ENCODE measurements at regions of chr13 and their contacts with region 1.

Region 1: DNA sequence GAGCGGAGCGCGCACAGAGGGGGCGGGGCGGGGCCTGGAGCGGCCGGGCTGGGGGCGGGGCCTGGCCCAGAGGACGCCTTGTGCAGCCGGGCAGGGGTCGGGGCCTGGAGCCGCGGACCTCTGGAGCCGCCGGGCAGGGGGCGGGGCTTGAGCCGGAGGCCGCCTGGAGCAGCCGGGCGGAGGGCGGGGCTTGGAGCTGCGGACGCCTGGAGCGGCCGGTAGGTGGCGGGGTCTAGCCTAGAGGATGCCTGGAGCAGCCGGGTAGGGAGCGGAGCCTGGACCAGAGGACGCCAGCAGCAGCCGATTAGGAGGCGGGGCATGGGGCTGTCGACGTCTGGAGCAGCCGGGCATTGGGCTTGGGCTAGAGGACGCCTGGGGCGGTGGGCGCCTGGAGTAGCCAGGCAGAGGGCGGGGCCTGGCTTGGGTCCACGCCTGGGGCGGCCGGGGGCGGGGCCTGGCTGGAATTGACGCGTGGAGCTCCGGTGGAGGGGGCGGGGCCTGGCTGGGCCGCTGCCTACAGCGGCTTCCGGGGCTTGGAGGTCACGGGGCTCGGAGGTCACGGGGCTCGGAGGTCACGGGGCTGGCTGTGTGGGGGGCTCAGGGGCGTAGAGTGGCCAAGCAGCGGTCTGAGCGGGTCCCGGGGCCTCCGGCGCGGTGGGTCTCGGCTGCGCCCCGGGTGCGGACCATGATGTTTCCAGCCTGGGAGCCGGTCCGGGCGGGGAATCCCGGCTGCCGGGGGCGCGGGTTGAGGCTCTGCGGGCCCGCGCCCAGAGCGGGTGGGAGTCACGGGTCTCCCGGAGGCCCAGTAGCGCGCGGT is at the start of gene ANKRD10:
- DNase-seq: peak; percentile 98
- ATAC-seq: peak; percentile 84
- H3K4me3 Mint-ChIP-seq: peak within 1 kb of the TSS; percentile 92
- H3K27ac Mint-ChIP-seq: peak within 1 kb of the TSS; percentile 93
- H3K4me1 Mint-ChIP-seq: peaks cover 39% of the 10 kb centered on the region
- H3K27me3 Mint-ChIP-seq: no peaks in the 10 kb centered on the region
- total RNA-seq, gene ANKRD10: 65.1 to 91.8 TPM

Region 2: DNA sequence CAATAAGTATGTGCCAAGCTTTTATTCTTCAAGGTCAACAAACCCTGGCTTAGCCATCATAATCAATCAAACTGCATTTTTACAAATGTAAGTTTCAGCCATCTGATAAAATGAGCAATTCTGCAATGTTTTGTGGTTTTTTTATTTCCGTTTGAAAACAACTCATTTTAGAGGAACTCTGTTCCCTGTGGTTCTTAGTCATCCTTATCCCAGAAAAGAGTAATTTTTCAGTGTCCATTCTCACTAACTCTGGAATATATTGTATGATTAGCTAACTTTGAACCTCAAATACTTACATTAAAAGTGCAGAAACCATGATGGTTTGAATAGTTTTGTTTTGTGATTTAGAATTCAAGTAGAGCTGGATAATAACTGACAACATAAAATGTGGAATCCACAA is 1216.5 kb before region 1 on chr13:
- CTCF ChIA-PET with region 1: no interaction called
- POLR2A ChIA-PET with region 1: no interaction called
- intact Hi-C with region 1: no loop called
- DNase-seq: no peak
- ATAC-seq: no peak
- H3K4me3 Mint-ChIP-seq: no peak overlapping the region
- H3K27ac Mint-ChIP-seq: no peak overlapping the region
- H3K4me1 Mint-ChIP-seq: peaks cover 6% of the 10 kb centered on the region
- H3K27me3 Mint-ChIP-seq: peaks cover 10% of the 10 kb centered on the region

Region 3: DNA sequence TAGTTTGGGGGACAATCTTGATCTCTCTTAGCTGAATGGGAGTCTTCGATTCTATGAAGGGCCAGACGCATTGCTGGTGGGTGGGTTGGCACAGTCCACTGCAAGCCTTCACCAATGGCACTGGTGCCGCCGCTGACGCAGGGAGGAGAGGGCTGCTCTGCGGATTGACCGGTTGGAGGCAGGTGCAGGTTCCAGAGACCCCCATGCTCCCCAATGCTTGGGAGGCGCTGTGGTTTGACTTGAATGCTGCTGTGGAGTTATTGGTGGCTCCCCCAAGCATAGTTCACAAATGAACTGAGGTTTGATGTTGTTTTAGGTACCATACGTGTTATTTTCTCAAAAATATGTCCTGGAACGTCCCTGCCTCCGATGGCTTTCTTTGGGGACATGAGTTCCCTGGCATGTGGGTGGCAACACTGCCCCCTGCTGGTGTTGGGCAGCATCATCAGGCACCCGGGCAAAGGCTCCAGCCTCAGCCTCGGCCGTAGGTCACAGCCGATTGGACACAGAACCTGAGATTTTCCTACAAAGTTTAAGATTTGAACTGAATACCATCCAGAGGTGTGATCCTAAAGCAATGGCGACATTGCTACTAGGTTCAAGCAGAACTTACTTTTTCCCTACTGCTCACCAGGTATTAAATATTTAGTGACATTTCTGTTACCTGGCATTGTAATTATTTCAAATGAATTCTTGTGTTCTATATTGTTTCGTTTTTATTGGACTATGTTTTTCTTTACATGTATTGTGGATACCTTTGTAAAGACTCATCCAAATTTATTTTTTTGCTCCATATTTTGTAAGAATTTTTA is 95.9 kb before region 1 on chr13:
- CTCF ChIA-PET with region 1: no interaction called
- POLR2A ChIA-PET with region 1: no interaction called
- intact Hi-C with region 1: no loop called
- DNase-seq: peak; percentile 89
- ATAC-seq: peak; percentile 89
- H3K4me3 Mint-ChIP-seq: no peak overlapping the region
- H3K27ac Mint-ChIP-seq: no peak overlapping the region
- H3K4me1 Mint-ChIP-seq: peaks cover 5% of the 10 kb centered on the region
- H3K27me3 Mint-ChIP-seq: peaks cover 3% of the 10 kb centered on the region

Region 4: DNA sequence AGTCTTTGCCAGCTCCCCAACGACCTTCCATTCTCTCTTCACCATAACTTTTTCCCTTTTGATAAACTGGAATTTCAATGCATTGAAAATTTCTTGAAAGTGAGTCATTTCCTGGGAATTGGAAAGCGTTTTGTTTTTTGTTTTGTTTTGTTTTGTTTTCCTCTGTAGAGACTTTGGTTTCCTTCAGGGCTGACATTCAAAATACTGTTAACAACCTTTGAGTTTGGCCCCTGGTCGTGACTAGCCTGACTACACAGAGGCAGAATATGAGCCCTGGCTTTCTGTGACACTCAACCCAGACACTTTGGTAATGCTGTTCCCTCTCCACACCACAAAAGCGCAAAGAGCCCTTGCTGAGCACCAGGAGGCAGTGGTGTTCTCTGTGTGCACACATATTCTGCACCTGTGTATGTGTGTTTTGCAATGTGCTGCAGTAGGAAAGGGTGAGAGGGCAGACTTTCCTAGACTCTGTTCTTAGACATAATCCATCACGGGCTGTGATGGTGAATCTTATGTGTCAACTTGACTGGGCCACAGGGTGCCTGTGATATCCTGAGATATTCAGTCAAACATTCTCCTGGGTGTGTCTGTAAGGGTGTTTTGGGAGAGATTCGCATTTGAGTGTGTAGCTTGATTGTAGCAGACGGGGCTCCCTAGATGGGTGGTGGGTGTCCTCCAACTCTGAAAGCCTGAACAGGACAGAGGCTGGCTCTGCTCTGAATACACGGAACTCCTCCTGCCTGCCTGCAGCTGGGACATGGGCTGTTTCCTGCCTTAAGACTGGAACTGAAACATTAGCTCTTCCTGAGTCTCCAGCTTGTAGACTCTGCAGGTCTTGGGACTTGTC is 29.1 kb after region 1 on chr13:
- CTCF ChIA-PET with region 1: interaction called, 3 read pairs
- POLR2A ChIA-PET with region 1: no interaction called
- intact Hi-C with region 1: loop called (anchors 1 kb)
- DNase-seq: peak; percentile 65
- ATAC-seq: peak; percentile 84
- H3K4me3 Mint-ChIP-seq: no peak overlapping the region
- H3K27ac Mint-ChIP-seq: no peak overlapping the region
- H3K4me1 Mint-ChIP-seq: peaks cover 33% of the 10 kb centered on the region
- H3K27me3 Mint-ChIP-seq: peaks cover 8% of the 10 kb centered on the region

Region 5: DNA sequence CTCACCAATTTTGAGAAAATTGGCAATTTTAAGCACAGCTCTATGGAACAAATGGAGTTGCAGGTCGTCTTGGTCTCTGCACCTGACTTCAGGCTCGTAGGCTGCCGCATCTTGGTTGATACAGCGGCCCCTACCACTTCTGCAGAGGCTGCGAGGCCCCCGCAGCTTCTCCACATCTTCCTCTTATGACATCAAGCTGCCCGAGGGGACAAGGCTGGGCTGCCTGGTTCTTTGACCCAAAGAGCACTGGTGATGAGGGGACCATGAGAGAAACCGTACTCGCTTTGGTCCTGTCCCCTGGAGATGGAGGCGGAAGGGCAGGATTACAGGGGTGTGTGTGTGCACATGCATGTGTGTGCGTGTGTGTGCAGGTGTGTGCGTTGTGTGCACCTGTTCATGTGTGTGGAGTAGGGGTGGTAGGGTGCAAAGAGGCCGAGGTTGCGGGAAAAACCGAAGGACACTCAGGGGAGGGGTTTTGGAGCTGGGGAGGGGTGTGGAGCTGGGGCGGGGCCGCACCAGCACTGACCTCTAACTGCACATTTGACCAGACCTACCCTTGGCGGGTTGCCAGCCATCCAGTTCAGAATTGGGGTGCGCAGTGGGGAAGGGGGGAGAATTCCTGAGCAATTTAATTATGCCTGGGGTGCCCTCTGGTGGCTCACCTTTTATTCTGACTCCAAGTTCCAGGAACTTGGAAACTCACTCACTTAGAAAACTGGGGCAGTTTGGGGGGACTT is 134.7 kb after region 1 on chr13:
- CTCF ChIA-PET with region 1: no interaction called
- POLR2A ChIA-PET with region 1: no interaction called
- intact Hi-C with region 1: loop called in 1 of 2 experiments (anchors 1 kb)
- DNase-seq: peak; percentile 21
- ATAC-seq: no peak
- H3K4me3 Mint-ChIP-seq: no peak overlapping the region
- H3K27ac Mint-ChIP-seq: no peak overlapping the region
- H3K4me1 Mint-ChIP-seq: peaks cover 4% of the 10 kb centered on the region
- H3K27me3 Mint-ChIP-seq: peaks cover 10% of the 10 kb centered on the region

Region 6: GRCh38 chr13:111129465-111130115 is 214.3 kb after region 1 on chr13:
- CTCF ChIA-PET with region 1: no interaction called
- POLR2A ChIA-PET with region 1: no interaction called
- intact Hi-C with region 1: no loop called
- DNase-seq: no peak
- ATAC-seq: no peak
- H3K4me3 Mint-ChIP-seq: no peak overlapping the region
- H3K27ac Mint-ChIP-seq: no peak overlapping the region
- H3K4me1 Mint-ChIP-seq: no peaks in the 10 kb centered on the region
- H3K27me3 Mint-ChIP-seq: no peaks in the 10 kb centered on the region

Region 7: DNA sequence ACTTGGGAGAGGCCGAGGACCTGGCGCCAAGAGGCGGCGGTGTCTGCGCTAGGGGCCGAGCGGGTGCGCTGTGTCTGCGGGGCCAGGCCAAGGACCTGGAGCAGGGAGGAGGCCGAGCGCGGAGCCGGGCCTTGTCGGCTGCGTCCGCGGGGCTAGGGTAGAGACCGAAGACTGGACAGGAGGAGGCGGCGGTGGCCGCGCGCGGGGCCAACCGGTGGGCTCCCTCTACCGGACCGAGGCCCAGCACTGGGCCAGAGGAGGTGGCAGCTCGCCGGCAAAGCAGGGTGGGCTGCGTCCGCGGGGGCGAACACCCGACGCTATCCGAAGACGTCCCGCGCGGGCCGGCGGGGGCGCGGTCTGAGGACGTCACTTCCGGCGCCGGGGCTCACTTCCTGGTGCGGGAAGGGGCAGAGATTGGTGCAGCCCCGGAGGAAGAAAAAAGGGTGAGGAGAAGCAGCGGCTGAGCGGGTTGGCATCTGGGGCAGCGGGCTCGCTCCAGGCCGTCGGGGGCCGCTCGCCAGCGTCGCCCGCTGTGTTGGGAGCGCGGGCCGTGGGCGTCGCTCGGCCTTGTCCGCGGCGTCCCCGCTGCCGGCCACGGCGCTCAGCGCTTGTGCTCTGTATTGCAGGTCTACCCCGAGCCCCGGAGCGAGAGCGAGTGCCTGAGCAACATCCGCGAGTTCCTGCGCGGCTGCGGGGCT is 238.2 kb after region 1 on chr13:
- CTCF ChIA-PET with region 1: no interaction called
- POLR2A ChIA-PET with region 1: no interaction called
- intact Hi-C with region 1: loop called (anchors 1 to 5 kb)
- DNase-seq: peak; percentile 96
- ATAC-seq: peak; percentile 89
- H3K4me3 Mint-ChIP-seq: peak overlapping the region; percentile 83
- H3K27ac Mint-ChIP-seq: peak overlapping the region; percentile 90
- H3K4me1 Mint-ChIP-seq: peaks cover 33% of the 10 kb centered on the region
- H3K27me3 Mint-ChIP-seq: no peaks in the 10 kb centered on the region

Measured in activated CD4-positive, alpha-beta T cell treated with anti-CD3 and anti-CD28 coated beads for 36 hours (primary cell).